AG04450 (cell line): ENCODE measurements at regions of chr12 and their contacts with region 1.

Region 1: GRCh38 chr12:12999959-13000615 is at the start of gene HEBP1:
- DNase-seq: peak; percentile 71
- H3K4me3 ChIP-seq: peak within 1 kb of the TSS; percentile 99
- H3K27ac ChIP-seq: peak within 1 kb of the TSS; percentile 77
- H3K27me3 ChIP-seq: no peaks in the 10 kb centered on the region
- CTCF ChIP-seq: no peak
- polyA plus RNA-seq, gene HEBP1: 57.7 and 76.3 TPM in 2 replicates

Region 2: GRCh38 chr12:12724661-12725545 is 275.2 kb before region 1 on chr12:
- CTCF ChIA-PET with region 1: no interaction called
- POLR2A ChIA-PET with region 1: interaction called, 12 read pairs
- DNase-seq: peak; percentile 99
- H3K4me3 ChIP-seq: peak overlapping the region; percentile 86
- H3K27ac ChIP-seq: peak overlapping the region; percentile 98
- H3K27me3 ChIP-seq: no peaks in the 10 kb centered on the region
- CTCF ChIP-seq: no peak

Region 3: GRCh38 chr12:12881151-12881894 is 118.8 kb before region 1 on chr12:
- CTCF ChIA-PET with region 1: no interaction called
- POLR2A ChIA-PET with region 1: no interaction called
- DNase-seq: no peak
- H3K4me3 ChIP-seq: no peak overlapping the region
- H3K27ac ChIP-seq: no peak overlapping the region
- H3K27me3 ChIP-seq: no peaks in the 10 kb centered on the region
- CTCF ChIP-seq: no peak